ENCODE measurements at regions of chr12 and their contacts with region 1.

Region 1: DNA sequence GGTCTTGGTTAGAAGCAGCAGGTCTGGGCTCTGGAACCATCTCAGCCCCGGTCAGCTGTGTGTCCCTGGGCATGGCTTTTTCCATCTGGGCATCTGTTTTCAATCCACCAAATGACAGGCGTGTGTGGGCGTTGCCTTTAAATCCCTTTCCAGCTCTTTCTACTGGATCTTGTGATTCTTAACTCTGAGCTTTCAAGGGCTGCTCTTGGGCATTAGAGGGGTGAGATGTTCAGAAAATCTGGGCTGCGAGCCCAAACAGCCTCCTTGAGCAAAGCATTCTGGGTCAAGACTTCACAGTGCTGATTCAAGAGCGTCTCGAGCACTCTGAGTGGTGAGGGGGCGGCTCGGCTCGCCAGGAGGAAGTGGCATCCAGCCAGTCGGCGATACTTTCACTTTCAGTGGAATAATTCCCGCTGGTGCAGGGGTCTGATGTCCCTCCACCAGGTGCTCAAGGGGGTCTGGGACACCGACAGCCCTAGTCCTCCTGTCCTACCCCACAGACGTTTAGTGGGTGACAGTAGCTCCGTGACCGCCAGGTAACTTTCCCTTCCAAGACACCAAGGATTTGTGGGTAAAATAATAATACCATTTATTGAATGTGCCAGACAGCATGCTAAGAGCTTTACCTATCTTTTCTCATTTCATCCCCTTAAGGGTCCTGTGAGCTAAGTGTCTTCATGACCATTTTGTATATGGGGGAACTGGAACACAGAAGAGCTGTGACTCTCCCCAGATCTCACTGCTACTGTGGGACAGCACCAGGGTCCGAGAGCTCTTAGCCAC is 114.0 kb downstream of the PLXNC1 start:
- DNase-seq: peak; percentile 85
- H3K4me3 Mint-ChIP-seq: peak overlapping the region; percentile 88
- H3K27ac Mint-ChIP-seq: peak overlapping the region; percentile 98
- H3K4me1 Mint-ChIP-seq: peaks cover 37% of the 10 kb centered on the region
- H3K27me3 Mint-ChIP-seq: no peaks in the 10 kb centered on the region

Region 2: DNA sequence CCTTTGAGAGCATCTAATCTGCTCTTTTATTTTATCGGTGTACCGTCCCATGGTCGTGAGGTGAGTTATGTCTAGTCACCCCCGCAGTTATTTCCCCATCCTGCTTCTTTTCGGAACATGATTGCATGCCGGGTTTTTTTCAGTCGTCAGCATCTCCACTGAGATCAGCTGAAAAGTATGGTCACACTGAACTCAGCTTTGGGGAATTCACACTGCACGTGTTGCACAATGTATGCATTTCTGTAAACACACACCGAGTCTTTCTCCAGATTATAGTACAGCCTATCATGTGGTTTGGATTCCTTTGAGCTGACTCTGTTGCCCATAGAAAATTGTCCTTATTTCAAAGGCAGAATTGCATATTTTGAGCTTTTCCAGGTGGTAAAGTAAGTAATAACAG is 89.4 kb before region 1 on chr12:
- CTCF ChIA-PET with region 1: no interaction called
- POLR2A ChIA-PET with region 1: interaction called, 3 read pairs
- intact Hi-C with region 1: loop called (anchors 1 kb)
- DNase-seq: no peak
- H3K4me3 Mint-ChIP-seq: no peak overlapping the region
- H3K27ac Mint-ChIP-seq: no peak overlapping the region
- H3K4me1 Mint-ChIP-seq: peaks cover 60% of the 10 kb centered on the region
- H3K27me3 Mint-ChIP-seq: no peaks in the 10 kb centered on the region

Region 3: GRCh38 chr12:94244165-94245133 is 18.0 kb before region 1 on chr12:
- CTCF ChIA-PET with region 1: no interaction called
- POLR2A ChIA-PET with region 1: no interaction called
- intact Hi-C with region 1: loop called (anchors 2 kb)
- DNase-seq: peak; percentile 74
- H3K4me3 Mint-ChIP-seq: no peak overlapping the region
- H3K27ac Mint-ChIP-seq: peak overlapping the region; percentile 72
- H3K4me1 Mint-ChIP-seq: peaks cover 19% of the 10 kb centered on the region
- H3K27me3 Mint-ChIP-seq: no peaks in the 10 kb centered on the region

Region 4: DNA sequence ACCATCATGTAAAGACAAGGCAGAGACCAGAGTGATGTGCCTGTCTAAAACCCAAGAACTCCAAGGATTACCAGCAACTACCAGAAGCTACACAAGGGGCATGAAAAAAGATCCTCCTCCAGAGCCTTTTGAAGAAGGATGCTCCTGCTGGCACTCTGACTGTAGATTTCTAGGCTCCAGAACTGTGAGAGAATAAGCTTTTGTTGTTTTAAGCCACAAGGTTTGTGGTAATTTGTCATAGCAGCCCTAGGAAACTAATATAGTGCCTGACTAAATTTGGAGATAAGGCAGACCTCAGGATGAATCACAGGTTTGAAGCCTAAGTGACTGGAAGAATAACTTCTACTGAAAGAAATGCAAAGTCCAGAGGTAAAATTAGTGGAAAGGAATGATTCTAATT is 64.3 kb after region 1 on chr12:
- CTCF ChIA-PET with region 1: no interaction called
- POLR2A ChIA-PET with region 1: no interaction called
- intact Hi-C with region 1: loop called (anchors 2 kb)
- DNase-seq: peak; percentile 20
- H3K4me3 Mint-ChIP-seq: no peak overlapping the region
- H3K27ac Mint-ChIP-seq: peak overlapping the region; percentile 8
- H3K4me1 Mint-ChIP-seq: peaks cover 24% of the 10 kb centered on the region
- H3K27me3 Mint-ChIP-seq: no peaks in the 10 kb centered on the region